ENCODE measurements at regions of chr20 and their contacts with region 1.

Region 1: DNA sequence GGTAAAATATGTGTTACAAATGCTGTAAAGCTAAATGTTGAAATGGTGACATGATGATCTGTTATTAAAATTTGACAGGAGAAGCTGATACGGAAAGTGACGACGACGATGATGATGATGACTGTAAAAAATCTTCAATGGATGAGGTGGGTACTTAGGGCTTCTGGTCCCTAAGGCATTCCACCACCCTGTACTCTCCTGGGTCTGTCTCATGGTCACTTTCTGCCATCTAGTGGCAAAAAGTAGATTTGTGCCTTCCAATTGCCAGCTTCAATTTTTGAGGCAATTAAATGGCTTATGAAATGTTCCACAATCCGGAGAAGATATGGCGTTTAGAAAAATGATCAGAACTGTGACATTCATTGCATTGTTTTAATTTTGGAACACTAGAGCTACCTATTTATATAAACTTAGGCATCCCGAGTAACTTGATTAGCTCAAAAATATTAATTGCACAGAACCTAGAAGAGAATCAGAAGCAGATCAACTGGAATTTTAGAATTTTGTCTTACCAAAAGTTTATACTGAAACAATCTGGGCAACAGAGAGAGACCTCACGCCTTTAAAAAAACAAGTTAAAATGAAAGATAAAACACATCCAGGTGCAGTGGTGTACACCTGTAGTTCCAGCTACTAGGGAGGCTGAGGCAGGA is 346.5 kb upstream of the PLCB4 start:
- DNase-seq: peak; percentile 46
- H3K4me3 Mint-ChIP-seq: no peak overlapping the region
- H3K27ac Mint-ChIP-seq: no peak overlapping the region
- H3K4me1 Mint-ChIP-seq: no peaks in the 10 kb centered on the region
- H3K27me3 Mint-ChIP-seq: peaks cover 2% of the 10 kb centered on the region

Region 2: GRCh38 chr20:7935027-7935551 is 787.3 kb before region 1 on chr20:
- CTCF ChIA-PET with region 1: interaction called, 36 read pairs
- intact Hi-C with region 1: loop called (anchors 1 kb)
- DNase-seq: no peak
- H3K4me3 Mint-ChIP-seq: no peak overlapping the region
- H3K27ac Mint-ChIP-seq: no peak overlapping the region
- H3K4me1 Mint-ChIP-seq: no peaks in the 10 kb centered on the region
- H3K27me3 Mint-ChIP-seq: peaks cover 13% of the 10 kb centered on the region

Region 3: GRCh38 chr20:8131598-8132483 is 590.6 kb before region 1 on chr20 and contains the start of gene PLCB1:
- CTCF ChIA-PET with region 1: interaction called, 11 read pairs
- intact Hi-C with region 1: loop called (anchors 1 kb)
- DNase-seq: peak; percentile 78
- H3K4me3 Mint-ChIP-seq: peak within 1 kb of the TSS; percentile 67
- H3K27ac Mint-ChIP-seq: no peak within 1 kb of the TSS
- H3K4me1 Mint-ChIP-seq: peaks cover 12% of the 10 kb centered on the region
- H3K27me3 Mint-ChIP-seq: peaks cover 32% of the 10 kb centered on the region
- total RNA-seq, gene PLCB1: 1.2 TPM

Region 4: DNA sequence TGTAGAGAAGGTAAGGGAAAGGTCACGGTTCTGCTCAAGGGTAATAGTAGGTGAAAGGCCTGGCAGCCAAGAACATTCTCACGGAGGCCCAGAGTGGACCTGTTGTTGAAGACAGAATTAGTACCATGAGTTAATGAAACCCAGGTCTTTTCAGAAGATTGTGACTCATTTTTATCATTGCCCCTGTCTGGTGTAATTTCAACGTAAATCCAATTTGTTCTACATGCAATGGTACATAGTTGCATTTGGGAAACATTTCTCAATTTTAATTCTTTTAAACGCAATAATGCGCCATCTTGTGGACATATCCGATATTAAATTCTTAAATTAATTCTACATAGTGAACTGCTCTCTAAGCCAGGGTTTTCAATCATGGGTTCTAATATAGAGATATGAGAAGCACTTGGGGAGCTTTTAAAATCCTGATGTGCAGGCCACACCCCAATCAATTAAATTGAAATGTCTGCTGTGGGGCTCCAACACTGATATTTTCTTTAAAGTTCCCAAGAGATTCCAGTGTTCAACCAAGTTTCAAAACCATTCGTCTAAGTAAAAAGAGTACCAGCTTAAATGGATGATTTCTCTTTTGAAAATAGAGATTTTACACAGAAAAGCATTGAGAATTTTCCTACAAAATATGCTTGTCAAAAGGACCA is 332.9 kb before region 1 on chr20:
- CTCF ChIA-PET with region 1: interaction called, 22 read pairs
- intact Hi-C with region 1: loop called (anchors 1 kb)
- DNase-seq: no peak
- H3K4me3 Mint-ChIP-seq: no peak overlapping the region
- H3K27ac Mint-ChIP-seq: no peak overlapping the region
- H3K4me1 Mint-ChIP-seq: no peaks in the 10 kb centered on the region
- H3K27me3 Mint-ChIP-seq: peaks cover 2% of the 10 kb centered on the region

Region 5: GRCh38 chr20:8505476-8506200 is 216.8 kb before region 1 on chr20:
- CTCF ChIA-PET with region 1: no interaction called
- intact Hi-C with region 1: no loop called
- DNase-seq: no peak
- H3K4me3 Mint-ChIP-seq: no peak overlapping the region
- H3K27ac Mint-ChIP-seq: no peak overlapping the region
- H3K4me1 Mint-ChIP-seq: no peaks in the 10 kb centered on the region
- H3K27me3 Mint-ChIP-seq: no peaks in the 10 kb centered on the region